ENCODE measurements at regions of chr16 and their contacts with region 1.

Region 1: DNA sequence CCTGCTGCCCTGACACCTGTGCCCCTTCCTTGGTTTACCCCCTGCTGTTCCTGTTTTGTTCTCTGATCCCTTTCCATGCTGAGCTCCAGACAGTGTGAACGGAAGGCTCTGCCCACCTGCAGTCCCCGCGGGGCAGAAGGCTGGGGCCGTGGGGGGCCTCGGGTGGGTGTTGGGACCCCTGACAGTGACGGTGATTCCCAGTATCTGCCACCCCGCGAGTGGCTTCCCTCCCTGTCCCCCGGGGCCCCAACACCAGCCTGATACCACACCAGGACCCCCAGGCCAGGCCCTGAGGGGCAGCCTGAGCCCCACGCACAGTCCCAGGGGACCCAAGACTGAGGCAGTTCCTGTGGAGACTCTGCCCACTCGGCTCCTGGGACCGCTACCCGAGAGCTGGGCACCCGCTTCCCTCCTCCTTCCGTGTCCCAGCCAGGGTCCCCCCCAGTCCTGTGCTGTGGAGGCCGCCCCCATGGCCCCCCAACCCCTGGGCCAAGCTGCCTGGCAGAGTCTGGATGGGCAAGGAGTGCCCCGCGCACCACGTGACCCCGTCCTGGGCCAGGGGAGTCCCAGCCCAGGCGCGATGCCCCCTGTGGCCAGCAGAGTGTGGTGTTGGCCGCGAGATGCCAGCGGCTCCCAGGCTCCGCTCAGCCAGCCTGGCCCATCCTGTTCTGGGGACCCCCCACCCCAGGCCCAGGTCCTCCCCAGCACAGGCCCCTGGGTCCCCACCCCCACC is 10.0 kb upstream of the C1QTNF8 start:
- DNase-seq: peak; percentile 39
- ATAC-seq: peak; percentile 76
- H3K4me3 ChIP-seq: no peak overlapping the region
- H3K27ac ChIP-seq: no peak overlapping the region
- H3K4me1 ChIP-seq: no peaks in the 10 kb centered on the region
- H3K27me3 ChIP-seq: peaks cover 32 to 82% of the 10 kb centered on the region in 2 experiments
- CTCF ChIP-seq: peak; percentile 95
- EP300 ChIP-seq: no peak
- POLR2A ChIP-seq: no peak
- RAD21 ChIP-seq: peak; percentile 94

Region 2: DNA sequence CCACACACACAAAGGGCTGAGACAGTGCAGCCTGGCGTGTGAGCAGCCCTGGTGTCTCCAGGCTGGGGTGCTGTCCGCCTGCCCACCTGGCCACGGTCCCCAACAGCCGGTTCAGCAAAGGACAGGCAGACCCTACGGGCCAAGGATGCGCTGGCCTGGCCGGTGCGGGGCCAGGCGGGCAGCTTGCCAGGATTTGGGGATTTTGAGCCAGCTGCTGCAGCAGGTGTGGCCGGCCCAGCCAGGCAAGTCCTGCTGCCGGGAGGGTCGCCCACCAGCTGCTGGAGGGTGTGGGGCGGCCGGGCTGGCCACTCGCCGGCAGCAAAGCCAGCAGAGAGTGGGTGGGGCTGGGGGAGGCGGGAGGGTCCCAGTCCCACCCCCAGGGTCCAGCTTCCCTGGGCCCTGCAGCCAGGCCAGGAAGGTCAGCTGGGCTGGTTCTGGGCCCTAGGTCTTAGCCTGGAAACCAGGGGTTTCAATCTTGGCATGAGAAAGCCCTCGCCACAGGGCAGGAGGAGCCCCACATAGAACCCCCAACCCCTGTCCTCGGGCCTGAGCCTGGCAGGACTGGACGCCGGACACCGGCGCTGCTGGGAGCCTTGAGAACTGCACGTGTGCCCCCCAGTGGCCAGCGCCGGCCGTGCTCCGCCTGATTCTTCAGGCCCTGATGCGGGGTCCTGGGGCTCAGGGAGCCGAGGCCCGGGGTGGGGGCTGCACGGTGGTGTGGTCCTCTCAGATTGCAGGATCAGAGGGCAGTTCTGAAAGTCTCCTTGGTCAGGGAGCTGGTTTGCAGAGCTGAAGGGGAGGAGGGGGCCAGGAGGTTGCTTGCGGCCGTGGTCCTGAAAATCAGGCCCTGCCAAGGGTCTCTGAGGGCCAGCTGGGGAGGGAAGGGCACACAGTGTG is 51.1 kb before region 1 on chr16:
- CTCF ChIA-PET with region 1: interaction called, 20 read pairs
- POLR2A ChIA-PET with region 1: no interaction called
- in situ Hi-C with region 1: no loop called
- intact Hi-C with region 1: no loop called
- DNase-seq: peak; percentile 26
- ATAC-seq: peak; percentile 82
- H3K4me3 ChIP-seq: no peak overlapping the region
- H3K27ac ChIP-seq: no peak overlapping the region
- H3K4me1 ChIP-seq: no peaks in the 10 kb centered on the region
- H3K27me3 ChIP-seq: peaks cover 19 to 55% of the 10 kb centered on the region in 2 experiments
- CTCF ChIP-seq: peak; percentile 92
- EP300 ChIP-seq: no peak
- POLR2A ChIP-seq: no peak
- RAD21 ChIP-seq: peak; percentile 90

Region 3: DNA sequence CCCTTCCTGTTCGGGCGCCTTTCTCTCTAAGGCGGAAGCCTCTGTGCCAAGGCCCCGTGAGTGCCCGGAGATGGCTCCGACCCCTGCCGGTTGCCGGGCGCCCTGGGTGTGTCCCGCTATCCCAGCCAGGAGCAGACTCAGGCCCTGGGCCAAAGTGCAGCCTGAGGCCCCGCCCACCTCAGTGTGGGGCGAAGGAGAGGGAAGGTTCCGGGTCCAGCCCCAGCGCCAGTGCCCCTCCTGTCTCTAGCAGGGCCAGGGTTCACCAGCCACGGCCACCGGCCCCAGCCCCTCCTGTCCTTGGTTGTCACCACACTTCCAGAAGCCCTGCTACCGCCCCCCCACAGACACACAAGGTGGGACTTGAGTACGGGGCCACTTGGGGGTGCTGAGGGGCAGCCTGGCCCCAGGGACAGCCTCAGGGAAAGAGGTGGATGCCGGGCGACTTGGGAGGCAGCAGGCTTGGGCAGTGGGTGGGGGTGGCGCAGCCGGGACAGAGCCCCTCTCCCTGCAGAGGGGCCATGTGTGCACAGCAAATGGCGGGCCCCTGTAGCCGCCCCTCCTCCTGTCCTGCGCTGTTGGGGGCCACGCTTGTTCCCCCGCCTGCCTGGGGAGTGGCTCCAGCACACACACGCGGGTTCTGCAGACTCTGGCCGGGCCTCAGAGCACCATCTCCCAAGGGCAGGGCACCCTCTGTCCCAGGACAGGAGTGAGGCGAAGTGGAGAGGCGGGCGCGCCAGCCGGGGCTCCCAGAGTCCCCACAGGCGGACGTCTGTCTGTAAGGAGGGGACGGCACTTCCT is 16.0 kb before region 1 on chr16:
- CTCF ChIA-PET with region 1: no interaction called
- POLR2A ChIA-PET with region 1: no interaction called
- in situ Hi-C with region 1: no loop called
- intact Hi-C with region 1: no loop called
- DNase-seq: peak; percentile 90
- ATAC-seq: peak; percentile 86
- H3K4me3 ChIP-seq: peak overlapping the region; percentile 63 to 87 (median 78)
- H3K27ac ChIP-seq: peak overlapping the region; percentile 86
- H3K4me1 ChIP-seq: peaks cover 47% of the 10 kb centered on the region
- H3K27me3 ChIP-seq: peaks cover 0 to 18% of the 10 kb centered on the region in 2 experiments; a peak in 3 of 5 replicates
- CTCF ChIP-seq: peak; percentile 64
- EP300 ChIP-seq: peak in 1 of 2 experiments; percentile 18; a peak in 1 of 4 replicates
- POLR2A ChIP-seq: peak; percentile 73 to 83
- RAD21 ChIP-seq: peak; percentile 79

Region 4: DNA sequence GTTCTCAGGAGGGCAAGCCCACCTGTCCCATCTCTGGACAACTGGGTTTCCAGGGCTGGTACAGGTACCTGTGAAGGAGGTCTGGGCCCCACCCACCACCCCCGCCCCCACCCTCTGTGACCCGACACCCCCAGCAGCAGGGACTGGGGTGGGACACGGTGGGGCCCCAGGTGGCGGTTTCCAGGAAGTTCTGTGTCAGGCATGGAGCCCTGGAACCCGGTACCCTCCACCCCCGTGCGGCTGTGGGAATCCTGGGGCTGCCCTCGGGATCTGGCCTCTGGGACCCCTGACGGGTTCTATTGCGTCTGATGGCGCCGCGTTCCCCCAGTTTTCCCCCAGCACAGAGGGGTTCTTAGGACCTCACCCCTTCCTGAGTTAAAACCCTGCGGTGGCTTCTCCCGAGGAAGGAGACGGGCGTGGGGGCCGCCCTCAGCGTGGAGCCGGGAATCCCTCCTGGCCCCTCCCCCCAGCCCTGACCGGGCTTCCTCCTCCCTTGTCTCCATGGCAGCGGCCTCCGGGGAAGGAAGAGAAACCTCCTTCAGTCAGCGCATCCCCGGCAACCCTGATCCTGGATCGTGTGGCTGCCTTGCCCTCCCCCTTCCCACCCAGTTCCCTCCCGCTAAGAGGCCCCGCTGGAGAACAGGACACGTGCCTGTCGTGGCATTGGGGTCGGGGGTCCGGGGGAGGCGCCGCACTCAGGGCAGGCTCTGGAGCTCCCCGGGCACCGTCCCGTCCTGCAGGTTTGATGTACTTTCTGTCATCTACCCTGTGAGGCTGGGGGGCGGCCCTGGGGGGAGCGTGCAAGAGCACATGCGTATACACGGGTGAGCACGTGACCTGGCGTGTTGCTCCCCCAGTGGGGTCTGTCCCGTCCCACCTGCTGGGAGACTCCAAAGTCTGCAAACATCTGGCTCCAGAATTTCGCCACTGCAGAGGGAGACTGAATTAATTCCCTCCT is 77.2 kb after region 1 on chr16:
- CTCF ChIA-PET with region 1: interaction called, 10 read pairs
- POLR2A ChIA-PET with region 1: no interaction called
- in situ Hi-C with region 1: no loop called
- intact Hi-C with region 1: no loop called
- DNase-seq: no peak
- ATAC-seq: no peak
- H3K4me3 ChIP-seq: no peak overlapping the region
- H3K27ac ChIP-seq: no peak overlapping the region
- H3K4me1 ChIP-seq: peaks cover 25% of the 10 kb centered on the region
- H3K27me3 ChIP-seq: peaks cover 0 to 30% of the 10 kb centered on the region in 2 experiments; a peak in 3 of 5 replicates
- CTCF ChIP-seq: no peak
- EP300 ChIP-seq: no peak
- POLR2A ChIP-seq: no peak
- RAD21 ChIP-seq: no peak

Region 5: GRCh38 chr16:1194665-1195392 is 88.8 kb after region 1 on chr16:
- CTCF ChIA-PET with region 1: interaction called, 3 read pairs
- POLR2A ChIA-PET with region 1: no interaction called
- in situ Hi-C with region 1: loop called (anchors 5 kb)
- intact Hi-C with region 1: loop called (anchors 1 kb)
- DNase-seq: no peak
- ATAC-seq: peak; percentile 48
- H3K4me3 ChIP-seq: no peak overlapping the region
- H3K27ac ChIP-seq: no peak overlapping the region
- H3K4me1 ChIP-seq: peaks cover 31% of the 10 kb centered on the region
- H3K27me3 ChIP-seq: peaks cover 2 to 33% of the 10 kb centered on the region in 2 experiments; a peak in 4 of 5 replicates
- CTCF ChIP-seq: peak; percentile 86
- EP300 ChIP-seq: no peak
- POLR2A ChIP-seq: no peak
- RAD21 ChIP-seq: peak; percentile 96